ENCODE measurements at regions of chr11 and their contacts with region 1.

Region 1: DNA sequence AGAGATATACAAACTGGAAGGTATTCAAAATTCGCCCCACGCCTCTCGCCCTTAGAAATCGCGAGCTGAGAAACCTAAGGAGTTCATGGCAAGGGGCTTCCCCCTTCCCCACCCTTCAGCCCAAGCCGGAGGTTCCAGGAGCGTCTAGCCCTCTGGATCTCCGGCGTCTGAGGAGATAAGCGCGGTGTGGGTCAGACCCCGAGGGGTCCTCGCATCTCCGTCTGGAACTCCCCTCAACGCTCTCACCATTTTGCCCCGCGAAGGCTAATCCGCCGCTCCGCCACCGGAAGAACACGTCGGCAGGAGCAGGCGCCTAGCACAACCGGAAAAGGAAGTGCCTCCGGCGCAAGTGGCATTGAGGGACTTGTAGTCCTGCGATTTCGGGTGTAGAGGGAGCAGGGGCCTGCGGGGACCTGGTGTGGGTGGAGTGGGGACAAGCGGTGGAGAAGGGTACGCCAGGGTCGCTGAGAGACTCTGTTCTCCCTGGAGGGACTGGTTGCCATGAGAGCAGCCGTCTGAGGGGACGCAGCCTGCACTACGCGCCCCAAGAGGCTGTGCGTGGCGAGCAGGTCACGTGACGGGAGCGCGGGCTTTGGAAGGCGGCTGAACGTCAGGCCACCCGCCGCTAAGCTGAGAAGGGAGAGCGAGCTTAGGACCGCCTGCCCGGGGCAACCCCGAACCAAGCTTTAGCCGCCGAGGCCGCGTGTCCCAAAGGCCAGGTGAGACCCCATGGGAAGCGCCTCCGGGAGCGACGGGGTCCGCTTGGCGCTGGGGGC is at the starts of genes FEN1 and TMEM258:
- DNase-seq: peak; percentile 89 to 90
- H3K4me3 ChIP-seq: peak within 1 kb of the TSS; percentile 68 to 83 (median 75)
- H3K27ac ChIP-seq: peak within 1 kb of the TSS; percentile 91 to 98 (median 96)
- H3K4me1 ChIP-seq: peaks cover 6 to 22% of the 10 kb centered on the region in 2 donors
- H3K27me3 ChIP-seq: no peaks in the 10 kb centered on the region
- CTCF ChIP-seq: peak in 2 of 6 experiments; percentile 24 to 40
- POLR2A ChIP-seq: peak in 1 of 2 donors; percentile 68
- total RNA-seq, gene FEN1: 4.1 to 6.3 (median 5.2) TPM
- total RNA-seq, gene TMEM258: 28.0 to 57.9 (median 48.1) TPM

Region 2: GRCh38 chr11:61885166-61885778 is 92.8 kb after region 1 on chr11:
- intact Hi-C with region 1: no loop called
- DNase-seq: peak in 1 of 2 donors; percentile 22
- H3K4me3 ChIP-seq: no peak overlapping the region
- H3K27ac ChIP-seq: no peak overlapping the region
- H3K4me1 ChIP-seq: peaks cover under 1 to 19% of the 10 kb centered on the region in 2 donors
- H3K27me3 ChIP-seq: no peaks in the 10 kb centered on the region
- CTCF ChIP-seq: no peak
- POLR2A ChIP-seq: no peak

Region 3: DNA sequence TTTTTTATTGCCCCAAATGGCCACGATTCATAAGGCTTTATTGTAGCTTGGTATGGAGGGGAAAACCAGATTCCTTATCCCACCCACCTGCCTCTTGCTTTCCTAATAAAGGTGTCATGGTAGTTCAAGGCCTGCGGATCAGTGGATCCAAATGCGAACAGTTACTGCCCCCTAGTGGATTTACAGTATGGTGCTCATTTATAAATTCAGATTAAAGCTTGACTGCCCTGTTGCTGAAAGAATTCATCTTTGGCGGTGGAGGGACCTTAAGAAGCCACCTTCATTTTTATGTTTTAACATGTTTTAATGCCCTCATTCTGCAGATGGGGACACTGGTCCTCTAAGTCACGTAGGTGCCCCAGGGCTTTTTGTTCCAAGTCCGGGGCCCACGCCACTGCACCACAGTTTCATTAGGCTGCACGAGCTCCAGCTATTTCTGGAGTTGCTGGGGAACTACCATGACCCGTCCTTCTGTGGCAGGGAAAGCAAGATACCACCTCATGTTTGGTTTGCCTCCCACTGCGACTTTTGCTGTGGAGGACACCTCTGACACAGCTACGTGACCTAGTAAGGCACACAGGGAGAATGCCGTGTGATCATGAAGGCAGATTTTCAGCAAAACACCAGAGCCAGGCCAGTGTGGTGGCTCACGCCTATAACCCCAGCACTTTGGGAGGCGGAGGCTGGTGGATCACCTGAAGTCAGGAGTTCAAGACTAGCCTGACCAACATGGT is 315.7 kb after region 1 on chr11:
- intact Hi-C with region 1: loop called (anchors 5 kb)
- DNase-seq: no peak
- H3K4me3 ChIP-seq: no peak overlapping the region
- H3K27ac ChIP-seq: no peak overlapping the region
- H3K4me1 ChIP-seq: peaks cover 4 to 24% of the 10 kb centered on the region in 2 donors
- H3K27me3 ChIP-seq: no peaks in the 10 kb centered on the region
- CTCF ChIP-seq: peak; percentile 69 to 85 (median 80)
- POLR2A ChIP-seq: no peak